ENCODE measurements at regions of chr7 and their contacts with region 1.

Region 1: GRCh38 chr7:93910076-93910994 is 4.0 kb downstream of the GNGT1 start:
- DNase-seq: no peak
- ATAC-seq: no peak
- H3K4me3 ChIP-seq: no peak overlapping the region
- H3K27ac ChIP-seq: no peak overlapping the region
- H3K4me1 ChIP-seq: no peaks in the 10 kb centered on the region
- H3K27me3 ChIP-seq: no peaks in the 10 kb centered on the region
- CTCF ChIP-seq: no peak
- EP300 ChIP-seq: no peak
- POLR2A ChIP-seq: no peak
- RAD21 ChIP-seq: no peak

Region 2: GRCh38 chr7:93895859-93896600 is 14.3 kb before region 1 on chr7:
- CTCF ChIA-PET with region 1: interaction called, 9 read pairs
- POLR2A ChIA-PET with region 1: no interaction called
- RAD21 ChIA-PET with region 1: no interaction called
- SMC1A ChIA-PET with region 1: interaction called, 19 read pairs
- in situ Hi-C with region 1: no loop called
- intact Hi-C with region 1: no loop called
- DNase-seq: no peak
- ATAC-seq: no peak
- H3K4me3 ChIP-seq: no peak overlapping the region
- H3K27ac ChIP-seq: no peak overlapping the region
- H3K4me1 ChIP-seq: no peaks in the 10 kb centered on the region
- H3K27me3 ChIP-seq: peaks cover 0 to 3% of the 10 kb centered on the region in 2 experiments; a peak in 2 of 4 replicates
- CTCF ChIP-seq: no peak
- EP300 ChIP-seq: no peak
- POLR2A ChIP-seq: no peak
- RAD21 ChIP-seq: no peak

Region 3: GRCh38 chr7:94679358-94679757 is 769.0 kb after region 1 on chr7:
- CTCF ChIA-PET with region 1: no interaction called
- POLR2A ChIA-PET with region 1: no interaction called
- RAD21 ChIA-PET with region 1: no interaction called
- SMC1A ChIA-PET with region 1: no interaction called
- in situ Hi-C with region 1: no loop called
- intact Hi-C with region 1: no loop called
- DNase-seq: no peak
- ATAC-seq: no peak
- H3K4me3 ChIP-seq: no peak overlapping the region
- H3K27ac ChIP-seq: no peak overlapping the region
- H3K4me1 ChIP-seq: no peaks in the 10 kb centered on the region
- H3K27me3 ChIP-seq: no peaks in the 10 kb centered on the region
- CTCF ChIP-seq: no peak
- EP300 ChIP-seq: no peak
- POLR2A ChIP-seq: no peak
- RAD21 ChIP-seq: no peak